ENCODE measurements at regions of chr11 and their contacts with region 1.

Region 1: DNA sequence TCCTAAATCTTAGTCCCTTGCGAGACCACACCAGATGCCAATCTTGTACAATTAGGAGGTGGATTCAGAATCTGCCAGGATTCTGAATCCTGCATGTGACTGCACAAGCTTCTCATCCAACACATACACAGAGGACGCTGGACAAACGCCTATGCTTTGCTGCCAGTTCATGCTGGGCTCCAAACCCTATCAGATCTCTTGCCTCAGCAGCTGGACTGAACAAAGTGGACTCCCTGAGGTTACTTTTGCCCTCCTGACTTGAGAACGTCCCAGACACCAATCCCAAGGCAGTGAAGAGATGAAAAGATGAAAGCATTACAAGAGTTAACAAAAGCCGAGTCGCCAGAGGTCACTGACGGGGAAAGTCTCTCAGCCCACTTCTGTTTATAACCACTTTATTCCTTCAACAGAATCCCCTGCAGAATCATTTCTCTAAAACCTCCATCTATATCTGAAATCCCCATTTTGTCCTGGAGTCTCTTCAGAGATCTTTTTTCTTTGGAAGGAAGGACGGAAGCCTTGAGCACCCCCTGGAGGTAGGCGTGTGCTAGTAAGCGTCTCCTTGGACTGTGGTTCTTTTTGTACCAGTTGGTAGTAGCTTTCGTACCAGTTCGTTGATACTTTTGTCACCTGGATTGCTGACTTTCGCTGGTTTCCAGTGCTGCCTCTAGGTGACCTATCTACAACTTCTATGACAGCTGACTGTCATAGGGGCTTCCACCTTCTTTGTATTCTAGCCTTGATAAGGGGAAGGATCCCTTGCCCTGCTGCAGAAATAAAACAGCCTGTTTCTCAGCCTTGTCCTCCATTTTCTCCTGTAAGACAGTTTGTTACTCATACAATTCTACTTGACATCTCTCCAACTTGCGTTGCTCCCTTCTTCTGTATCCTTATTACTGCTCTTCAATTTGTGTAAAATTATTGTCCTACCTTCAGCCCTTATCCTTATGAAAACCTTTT is 26.1 kb upstream of the EED start:
- DNase-seq: peak; percentile 79
- ATAC-seq: peak; percentile 40
- H3K4me3 Mint-ChIP-seq: peak overlapping the region; percentile 26
- H3K27ac Mint-ChIP-seq: peak overlapping the region; percentile 91
- H3K4me1 Mint-ChIP-seq: peaks cover 78% of the 10 kb centered on the region
- H3K27me3 Mint-ChIP-seq: no peaks in the 10 kb centered on the region

Region 2: GRCh38 chr11:86041975-86042378 is 176.4 kb before region 1 on chr11:
- CTCF ChIA-PET with region 1: interaction called, 19 read pairs
- POLR2A ChIA-PET with region 1: no interaction called
- intact Hi-C with region 1: loop called (anchors 1 kb)
- DNase-seq: peak; percentile 63
- ATAC-seq: peak; percentile 70
- H3K4me3 Mint-ChIP-seq: peak overlapping the region; percentile 20
- H3K27ac Mint-ChIP-seq: peak overlapping the region; percentile 68
- H3K4me1 Mint-ChIP-seq: peaks cover 71% of the 10 kb centered on the region
- H3K27me3 Mint-ChIP-seq: no peaks in the 10 kb centered on the region

Region 3: DNA sequence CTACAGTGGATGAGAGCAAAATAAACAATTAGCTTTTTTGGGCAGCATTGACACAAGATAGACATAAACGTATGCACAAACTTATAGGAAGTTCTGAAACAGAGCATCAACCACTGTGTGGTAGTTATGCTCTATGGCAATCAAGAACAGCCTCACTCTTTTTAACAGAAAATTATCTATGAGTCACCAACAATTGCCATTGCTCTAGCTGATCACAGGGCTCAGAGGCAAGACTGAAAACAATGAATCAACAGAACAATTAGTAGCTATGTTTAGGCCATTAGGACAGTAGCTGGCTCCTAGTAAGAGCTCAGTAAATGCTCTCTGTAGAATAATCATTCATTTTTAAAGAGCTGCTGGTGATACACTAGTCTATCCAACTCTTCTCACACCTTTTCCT is 114.6 kb before region 1 on chr11:
- CTCF ChIA-PET with region 1: no interaction called
- POLR2A ChIA-PET with region 1: no interaction called
- intact Hi-C with region 1: no loop called
- DNase-seq: no peak
- ATAC-seq: no peak
- H3K4me3 Mint-ChIP-seq: no peak overlapping the region
- H3K27ac Mint-ChIP-seq: no peak overlapping the region
- H3K4me1 Mint-ChIP-seq: peaks cover 3% of the 10 kb centered on the region
- H3K27me3 Mint-ChIP-seq: peaks cover 8% of the 10 kb centered on the region

Region 4: DNA sequence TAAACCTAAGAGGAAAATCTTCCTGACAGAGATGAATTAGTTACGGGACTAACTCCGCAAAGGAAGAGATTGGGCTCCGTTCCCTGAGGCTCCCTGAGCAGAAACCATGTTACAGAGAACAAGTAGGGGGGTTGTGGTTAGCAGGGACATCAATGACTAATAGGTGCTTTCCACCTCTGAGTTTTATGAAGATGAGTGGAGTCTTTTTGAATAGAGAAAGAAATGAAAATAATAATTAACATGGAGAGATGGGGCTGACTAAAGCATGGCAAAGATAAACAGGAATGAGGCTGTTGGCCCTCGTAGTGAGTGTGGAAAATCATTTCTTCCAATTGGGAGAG is 102.0 kb before region 1 on chr11:
- CTCF ChIA-PET with region 1: no interaction called
- POLR2A ChIA-PET with region 1: no interaction called
- intact Hi-C with region 1: loop called in 1 of 2 experiments (anchors 5 kb)
- DNase-seq: peak; percentile 52
- ATAC-seq: peak; percentile 95
- H3K4me3 Mint-ChIP-seq: peak overlapping the region; percentile 0
- H3K27ac Mint-ChIP-seq: peak overlapping the region; percentile 66
- H3K4me1 Mint-ChIP-seq: peaks cover 32% of the 10 kb centered on the region
- H3K27me3 Mint-ChIP-seq: peaks cover 7% of the 10 kb centered on the region

Region 5: GRCh38 chr11:86174101-86175046 is 44.0 kb before region 1 on chr11:
- CTCF ChIA-PET with region 1: interaction called, 3 read pairs
- POLR2A ChIA-PET with region 1: no interaction called
- intact Hi-C with region 1: loop called in 1 of 2 experiments (anchors 5 kb)
- DNase-seq: peak; percentile 30
- ATAC-seq: peak; percentile 18
- H3K4me3 Mint-ChIP-seq: no peak overlapping the region
- H3K27ac Mint-ChIP-seq: no peak overlapping the region
- H3K4me1 Mint-ChIP-seq: peaks cover 31% of the 10 kb centered on the region
- H3K27me3 Mint-ChIP-seq: no peaks in the 10 kb centered on the region

Region 6: GRCh38 chr11:86202013-86202336 is 16.4 kb before region 1 on chr11:
- CTCF ChIA-PET with region 1: interaction called, 15 read pairs
- POLR2A ChIA-PET with region 1: interaction called, 3 read pairs
- intact Hi-C with region 1: loop called (anchors 1 kb)
- DNase-seq: peak; percentile 39
- ATAC-seq: peak; percentile 94
- H3K4me3 Mint-ChIP-seq: no peak overlapping the region
- H3K27ac Mint-ChIP-seq: no peak overlapping the region
- H3K4me1 Mint-ChIP-seq: peaks cover 6% of the 10 kb centered on the region
- H3K27me3 Mint-ChIP-seq: peaks cover under 1% of the 10 kb centered on the region

Region 7: DNA sequence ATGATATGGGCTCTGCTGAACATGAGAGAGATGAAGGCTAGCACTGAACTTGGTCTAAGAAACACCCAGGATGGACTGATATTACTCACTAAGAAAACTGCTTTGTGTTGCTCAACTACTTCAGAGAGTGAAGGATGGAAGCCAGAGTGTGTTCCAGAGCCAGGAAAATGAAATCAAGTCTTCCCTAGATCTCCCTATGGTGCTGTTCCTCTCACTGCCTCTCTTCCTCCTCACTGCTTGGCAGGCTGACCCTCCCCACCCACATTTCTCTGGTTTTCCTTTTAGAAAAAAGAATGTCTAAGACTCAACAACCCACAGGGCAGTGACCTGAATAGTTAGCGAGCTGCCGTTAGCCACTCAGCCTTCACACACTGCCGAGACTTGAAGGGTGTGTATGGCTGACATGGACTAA is 221.9 kb after region 1 on chr11:
- CTCF ChIA-PET with region 1: no interaction called
- POLR2A ChIA-PET with region 1: no interaction called
- intact Hi-C with region 1: no loop called
- DNase-seq: no peak
- ATAC-seq: no peak
- H3K4me3 Mint-ChIP-seq: no peak overlapping the region
- H3K27ac Mint-ChIP-seq: no peak overlapping the region
- H3K4me1 Mint-ChIP-seq: peaks cover 25% of the 10 kb centered on the region
- H3K27me3 Mint-ChIP-seq: no peaks in the 10 kb centered on the region

Region 8: GRCh38 chr11:86696004-86696403 is 477.6 kb after region 1 on chr11:
- CTCF ChIA-PET with region 1: no interaction called
- POLR2A ChIA-PET with region 1: no interaction called
- intact Hi-C with region 1: no loop called
- DNase-seq: no peak
- ATAC-seq: no peak
- H3K4me3 Mint-ChIP-seq: no peak overlapping the region
- H3K27ac Mint-ChIP-seq: no peak overlapping the region
- H3K4me1 Mint-ChIP-seq: peaks cover 6% of the 10 kb centered on the region
- H3K27me3 Mint-ChIP-seq: peaks cover 9% of the 10 kb centered on the region

Measured in activated CD4-positive, alpha-beta T cell treated with anti-CD3 and anti-CD28 coated beads for 36 hours (primary cell).